CD8-positive, alpha-beta T cell (primary cell): ENCODE measurements at regions of chr1 and their contacts with region 1.

Region 1: GRCh38 chr1:86470859-86471258 is 2.1 kb downstream of the CLCA1 start:
- DNase-seq: no peak
- ATAC-seq: no peak
- H3K4me3 ChIP-seq: no peak overlapping the region
- H3K4me3 Mint-ChIP-seq: no peak overlapping the region
- H3K27ac ChIP-seq: no peak overlapping the region
- H3K27ac Mint-ChIP-seq: no peak overlapping the region
- H3K4me1 ChIP-seq: no peaks in the 10 kb centered on the region
- H3K4me1 Mint-ChIP-seq: no peaks in the 10 kb centered on the region
- H3K27me3 ChIP-seq: peaks cover 0 to 3% of the 10 kb centered on the region in 2 experiments
- H3K27me3 Mint-ChIP-seq: peaks cover 13% of the 10 kb centered on the region
- CTCF ChIP-seq: no peak

Region 2: DNA sequence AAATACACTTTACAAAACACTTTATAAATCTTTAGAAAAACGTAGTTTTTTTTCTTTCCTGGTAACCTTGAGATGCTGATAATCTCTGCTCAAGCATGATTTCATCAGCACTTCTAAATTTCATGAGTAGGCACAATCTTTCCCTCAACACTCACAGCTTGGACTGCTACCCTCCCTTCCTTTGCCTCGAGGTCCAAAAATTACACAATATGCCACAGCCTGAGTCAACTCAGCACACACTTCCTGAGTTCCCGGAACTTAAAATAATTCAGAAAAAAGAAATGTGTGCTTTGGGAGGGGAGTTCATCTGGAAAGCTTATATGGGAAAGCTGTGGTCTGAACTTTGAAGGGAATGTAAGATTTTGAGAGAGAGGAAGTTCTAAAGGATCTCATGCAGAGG is 41.0 kb before region 1 on chr1:
- CTCF ChIA-PET with region 1: no interaction called
- POLR2A ChIA-PET with region 1: no interaction called
- intact Hi-C with region 1: no loop called
- DNase-seq: peak in 1 of 9 experiments; percentile 20
- ATAC-seq: no peak
- H3K4me3 ChIP-seq: no peak overlapping the region
- H3K4me3 Mint-ChIP-seq: no peak overlapping the region
- H3K27ac ChIP-seq: no peak overlapping the region
- H3K27ac Mint-ChIP-seq: no peak overlapping the region
- H3K4me1 ChIP-seq: peaks cover 7% of the 10 kb centered on the region
- H3K4me1 Mint-ChIP-seq: no peaks in the 10 kb centered on the region
- H3K27me3 ChIP-seq: peaks cover 0 to 2% of the 10 kb centered on the region in 2 experiments
- H3K27me3 Mint-ChIP-seq: peaks cover 7% of the 10 kb centered on the region
- CTCF ChIP-seq: no peak

Region 3: DNA sequence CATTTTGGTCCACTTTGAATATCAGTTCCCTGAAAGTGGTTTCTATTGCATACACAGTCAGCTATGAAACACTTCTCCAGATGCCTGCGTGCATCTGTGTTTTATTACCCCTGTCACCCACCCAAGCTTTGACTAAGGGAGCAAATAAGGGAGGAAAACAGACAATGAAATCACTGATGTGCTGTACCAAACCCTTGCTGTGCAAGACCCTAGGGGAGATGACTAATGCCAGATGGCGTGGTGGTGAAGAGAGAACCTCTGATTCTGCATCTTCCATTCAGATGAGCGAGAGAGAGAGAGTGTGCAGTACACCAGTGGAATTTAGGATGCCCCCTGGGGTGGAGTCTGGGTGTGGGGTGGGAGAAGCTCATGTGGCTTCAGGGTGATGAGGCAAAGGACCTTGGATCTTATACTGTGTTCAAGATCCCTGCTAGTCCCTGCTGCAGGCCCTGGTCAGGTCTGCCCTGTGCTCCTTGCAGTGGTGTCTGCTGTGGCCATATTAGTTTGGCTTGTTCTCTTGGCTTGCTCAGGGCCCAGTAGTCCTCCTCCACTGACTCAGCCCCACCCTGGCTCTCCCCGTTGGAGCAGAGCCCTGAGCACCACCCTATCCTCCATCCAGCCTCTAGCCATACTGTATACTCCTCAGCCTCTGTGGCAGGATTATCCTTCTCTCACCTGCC is 16.4 kb after region 1 on chr1:
- CTCF ChIA-PET with region 1: interaction called, 19 read pairs
- POLR2A ChIA-PET with region 1: no interaction called
- intact Hi-C with region 1: no loop called
- DNase-seq: no peak
- ATAC-seq: no peak
- H3K4me3 ChIP-seq: no peak overlapping the region
- H3K4me3 Mint-ChIP-seq: no peak overlapping the region
- H3K27ac ChIP-seq: no peak overlapping the region
- H3K27ac Mint-ChIP-seq: no peak overlapping the region
- H3K4me1 ChIP-seq: no peaks in the 10 kb centered on the region
- H3K4me1 Mint-ChIP-seq: no peaks in the 10 kb centered on the region
- H3K27me3 ChIP-seq: no peaks in the 10 kb centered on the region
- H3K27me3 Mint-ChIP-seq: no peaks in the 10 kb centered on the region
- CTCF ChIP-seq: no peak

Region 4: GRCh38 chr1:86741947-86742572 is 271.2 kb after region 1 on chr1:
- CTCF ChIA-PET with region 1: interaction called, 4 read pairs
- POLR2A ChIA-PET with region 1: no interaction called
- intact Hi-C with region 1: loop called (anchors 1 to 2 kb)
- DNase-seq: peak in 6 of 9 experiments; percentile 11 to 71 (median 48)
- ATAC-seq: no peak
- H3K4me3 ChIP-seq: no peak overlapping the region
- H3K4me3 Mint-ChIP-seq: no peak overlapping the region
- H3K27ac ChIP-seq: no peak overlapping the region
- H3K27ac Mint-ChIP-seq: no peak overlapping the region
- H3K4me1 ChIP-seq: peaks cover 20% of the 10 kb centered on the region
- H3K4me1 Mint-ChIP-seq: peaks cover 4% of the 10 kb centered on the region
- H3K27me3 ChIP-seq: no peaks in the 10 kb centered on the region
- H3K27me3 Mint-ChIP-seq: no peaks in the 10 kb centered on the region
- CTCF ChIP-seq: peak; percentile 83

Region 5: GRCh38 chr1:86965012-86965826 is 494.4 kb after region 1 on chr1:
- CTCF ChIA-PET with region 1: no interaction called
- POLR2A ChIA-PET with region 1: no interaction called
- intact Hi-C with region 1: loop called in 1 of 2 experiments (anchors 10 kb)
- DNase-seq: peak in 4 of 9 experiments; percentile 13 to 53 (median 31)
- ATAC-seq: no peak
- H3K4me3 ChIP-seq: no peak overlapping the region
- H3K4me3 Mint-ChIP-seq: no peak overlapping the region
- H3K27ac ChIP-seq: no peak overlapping the region
- H3K27ac Mint-ChIP-seq: no peak overlapping the region
- H3K4me1 ChIP-seq: no peaks in the 10 kb centered on the region
- H3K4me1 Mint-ChIP-seq: no peaks in the 10 kb centered on the region
- H3K27me3 ChIP-seq: no peaks in the 10 kb centered on the region
- H3K27me3 Mint-ChIP-seq: no peaks in the 10 kb centered on the region
- CTCF ChIP-seq: peak; percentile 52